ENCODE measurements at regions of chr1 and their contacts with region 1.

Region 1: GRCh38 chr1:212291505-212292134 is 6.4 kb downstream of the PPP2R5A start:
- DNase-seq: peak; percentile 37 to 70 (median 51)
- ATAC-seq: peak; percentile 74
- H3K4me3 ChIP-seq: no peak overlapping the region
- H3K27ac ChIP-seq: no peak overlapping the region
- H3K4me1 ChIP-seq: peaks cover 6 to 50% of the 10 kb centered on the region in 2 experiments
- H3K27me3 ChIP-seq: no peaks in the 10 kb centered on the region
- CTCF ChIP-seq: peak; percentile 71 to 95 (median 78); a peak in 5 of 6 replicates
- EP300 ChIP-seq: no peak
- POLR2A ChIP-seq: no peak
- RAD21 ChIP-seq: peak; percentile 96 to 98

Region 2: DNA sequence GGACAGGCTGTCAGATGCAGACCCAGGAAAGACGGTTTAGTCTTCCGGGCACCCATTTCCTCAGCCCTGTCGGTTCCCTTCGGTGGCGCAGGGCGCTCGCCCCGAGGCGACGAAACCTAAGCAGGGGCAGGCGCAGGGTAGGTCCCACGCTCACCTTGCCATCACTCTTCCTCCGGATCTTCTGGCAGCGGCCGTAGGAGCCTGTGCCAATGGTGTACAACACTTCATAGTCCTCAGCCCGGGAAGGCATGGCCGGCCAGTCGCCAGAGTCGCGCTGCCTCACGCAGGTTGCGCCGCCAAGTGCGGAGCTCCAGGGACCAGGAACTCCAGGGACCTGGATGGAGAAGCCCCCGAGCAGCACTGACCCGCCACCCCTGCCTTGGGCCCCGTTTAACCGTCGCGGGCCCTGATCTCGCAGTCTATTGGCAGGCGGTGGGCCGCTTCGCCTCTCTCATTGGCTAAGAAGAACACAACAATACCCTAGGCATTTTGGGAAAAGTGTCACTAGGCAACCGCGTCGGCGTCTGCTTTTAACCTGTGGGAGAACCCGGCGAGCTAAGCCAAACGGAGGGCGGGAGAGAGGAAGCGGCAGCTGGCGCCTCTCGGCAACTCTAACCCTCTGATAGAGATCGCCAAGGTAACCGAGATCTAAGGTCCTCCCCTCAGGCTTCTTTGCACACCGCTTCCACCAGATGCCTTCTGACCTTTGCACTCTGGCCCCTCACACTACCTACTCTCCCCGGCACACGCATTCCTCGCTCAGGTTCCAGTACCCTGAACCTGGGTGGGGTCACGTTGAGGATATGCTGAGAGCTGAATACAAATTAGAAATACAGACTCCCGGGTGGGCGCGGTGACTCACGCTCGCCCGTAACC is 616.2 kb before region 1 on chr1 and contains the start of gene NEK2:
- CTCF ChIA-PET with region 1: no interaction called
- POLR2A ChIA-PET with region 1: no interaction called
- in situ Hi-C with region 1: no loop called
- intact Hi-C with region 1: loop called (anchors 5 kb)
- DNase-seq: peak; percentile 95 to 99 (median 95)
- ATAC-seq: peak; percentile 97
- H3K4me3 ChIP-seq: peak within 1 kb of the TSS; percentile 75
- H3K27ac ChIP-seq: peak within 1 kb of the TSS; percentile 88
- H3K4me1 ChIP-seq: peaks cover 10 to 16% of the 10 kb centered on the region in 2 experiments; a peak in 4 of 5 replicates
- H3K27me3 ChIP-seq: no peaks in the 10 kb centered on the region
- CTCF ChIP-seq: no peak
- EP300 ChIP-seq: peak; percentile 19; the same call in 1 of the 2 replicates
- POLR2A ChIP-seq: peak; percentile 90
- RAD21 ChIP-seq: 0 out of 4 replicates have a peak, but pooled peaks have one; percentile 9 to 17
- polyA plus RNA-seq, gene NEK2: 30.0 to 38.6 TPM

Region 3: GRCh38 chr1:212012034-212012740 is 279.4 kb before region 1 on chr1:
- CTCF ChIA-PET with region 1: no interaction called
- POLR2A ChIA-PET with region 1: no interaction called
- in situ Hi-C with region 1: no loop called
- intact Hi-C with region 1: loop called (anchors 2 kb)
- DNase-seq: peak; percentile 77 to 82 (median 78)
- ATAC-seq: peak; percentile 97
- H3K4me3 ChIP-seq: no peak overlapping the region
- H3K27ac ChIP-seq: no peak overlapping the region
- H3K4me1 ChIP-seq: no peaks in the 10 kb centered on the region
- H3K27me3 ChIP-seq: no peaks in the 10 kb centered on the region
- CTCF ChIP-seq: peak; percentile 92 to 98 (median 95)
- EP300 ChIP-seq: 0 out of 2 replicates have a peak, but pooled peaks have one; percentile 16
- POLR2A ChIP-seq: no peak
- RAD21 ChIP-seq: peak; percentile 89 to 95

Region 4: DNA sequence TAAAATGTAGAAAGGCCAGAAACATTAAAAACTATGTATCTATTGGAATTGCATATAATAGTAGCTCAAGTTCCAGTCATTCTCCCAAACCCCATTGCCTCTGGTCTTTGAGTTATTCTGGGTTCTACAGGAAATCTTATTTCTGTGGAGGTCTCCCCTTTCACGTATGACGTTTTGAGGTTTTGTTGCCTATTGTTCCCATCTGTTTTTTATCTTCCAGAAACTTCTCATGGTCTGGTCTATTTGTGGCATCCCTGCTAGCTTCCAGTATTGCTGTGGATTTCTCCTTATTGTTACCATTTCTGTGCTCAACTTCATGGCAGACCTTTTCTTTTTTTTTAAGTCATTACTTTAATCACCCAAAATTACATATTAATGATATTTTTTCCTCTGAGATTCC is 212.8 kb before region 1 on chr1:
- CTCF ChIA-PET with region 1: interaction called, 16 read pairs
- POLR2A ChIA-PET with region 1: no interaction called
- in situ Hi-C with region 1: no loop called
- intact Hi-C with region 1: loop called (anchors 2 kb)
- DNase-seq: no peak
- ATAC-seq: no peak
- H3K4me3 ChIP-seq: no peak overlapping the region
- H3K27ac ChIP-seq: no peak overlapping the region
- H3K4me1 ChIP-seq: no peaks in the 10 kb centered on the region
- H3K27me3 ChIP-seq: no peaks in the 10 kb centered on the region
- CTCF ChIP-seq: no peak
- EP300 ChIP-seq: no peak
- POLR2A ChIP-seq: no peak
- RAD21 ChIP-seq: no peak

Region 5: DNA sequence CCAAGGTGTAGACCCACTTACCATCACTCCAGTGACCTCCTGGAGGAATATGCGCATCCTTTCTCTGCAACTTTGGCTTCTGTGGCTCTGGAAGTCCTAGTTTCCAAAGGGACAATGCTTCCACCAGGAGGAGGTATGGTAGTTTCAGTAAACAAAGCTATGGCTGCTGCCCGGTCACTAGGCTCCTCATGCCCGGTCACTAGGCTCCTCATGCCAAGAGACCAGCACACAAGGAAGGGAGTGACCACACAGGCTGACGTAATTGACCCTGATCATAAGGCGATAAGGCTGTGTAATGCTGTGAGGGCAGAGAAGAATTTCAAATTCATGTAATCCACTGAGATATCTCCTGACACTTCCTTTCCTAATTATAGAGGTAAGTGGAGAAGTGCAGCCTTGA is 153.2 kb before region 1 on chr1:
- CTCF ChIA-PET with region 1: interaction called, 14 read pairs
- POLR2A ChIA-PET with region 1: no interaction called
- in situ Hi-C with region 1: no loop called
- intact Hi-C with region 1: loop called (anchors 1 kb)
- DNase-seq: no peak
- ATAC-seq: peak; percentile 53
- H3K4me3 ChIP-seq: no peak overlapping the region
- H3K27ac ChIP-seq: 0 out of 3 replicates have a peak overlapping the region, but pooled peaks have one; percentile 0
- H3K4me1 ChIP-seq: peaks cover 5 to 20% of the 10 kb centered on the region in 2 experiments; a peak in 4 of 5 replicates
- H3K27me3 ChIP-seq: no peaks in the 10 kb centered on the region
- CTCF ChIP-seq: peak; percentile 16 to 51 (median 33); a peak in 3 of 6 replicates
- EP300 ChIP-seq: no peak
- POLR2A ChIP-seq: no peak
- RAD21 ChIP-seq: peak; percentile 77 to 78

Region 6: GRCh38 chr1:212315907-212316306 is 24.3 kb after region 1 on chr1:
- CTCF ChIA-PET with region 1: no interaction called
- POLR2A ChIA-PET with region 1: interaction called, 10 read pairs
- in situ Hi-C with region 1: no loop called
- intact Hi-C with region 1: no loop called
- DNase-seq: peak in 1 of 4 experiments; percentile 55
- ATAC-seq: peak; percentile 89
- H3K4me3 ChIP-seq: no peak overlapping the region
- H3K27ac ChIP-seq: no peak overlapping the region
- H3K4me1 ChIP-seq: no peaks in the 10 kb centered on the region
- H3K27me3 ChIP-seq: no peaks in the 10 kb centered on the region
- CTCF ChIP-seq: peak; percentile 42 to 67 (median 48); a peak in 5 of 6 replicates
- EP300 ChIP-seq: no peak
- POLR2A ChIP-seq: no peak
- RAD21 ChIP-seq: peak; percentile 62 to 80

Measured in K562 (cell line).